ENCODE measurements at regions of chr17 and their contacts with region 1.

Region 1: DNA sequence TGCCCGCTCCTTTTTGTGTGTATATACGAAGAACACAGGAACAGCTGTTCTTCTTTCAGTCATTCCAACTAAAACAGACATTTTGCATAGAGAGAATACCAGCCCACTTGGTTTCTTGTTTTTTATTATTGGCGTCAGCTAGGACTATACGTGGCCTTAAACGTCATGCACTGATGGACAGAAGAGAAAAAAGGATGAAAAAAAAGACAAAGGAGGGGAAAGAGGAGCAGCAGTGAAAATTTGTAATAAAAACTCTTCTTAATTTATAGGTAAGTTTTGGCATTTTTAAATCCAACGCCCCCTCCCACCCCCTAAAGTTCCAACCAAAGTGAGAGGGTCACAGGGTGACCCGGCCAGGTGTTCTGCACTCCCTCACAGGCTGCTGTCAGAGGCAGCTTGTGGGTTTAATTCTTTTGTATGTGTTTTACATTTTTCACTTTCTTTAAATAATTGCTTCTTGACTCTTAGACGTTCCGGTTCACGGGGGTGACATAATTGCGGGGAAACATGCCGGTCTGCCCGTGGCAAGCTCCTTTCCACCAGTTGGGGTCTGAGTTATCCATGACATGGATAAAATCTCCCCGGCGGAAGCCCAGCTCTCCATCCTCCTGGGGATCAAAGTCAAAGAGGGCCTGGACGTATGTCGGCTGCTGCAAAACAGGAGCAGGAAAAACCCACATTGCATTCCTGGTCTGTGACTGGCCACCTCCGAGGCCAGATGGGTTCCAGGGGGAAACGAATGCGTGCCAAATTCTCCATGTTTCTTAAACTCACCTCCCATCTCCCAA is 30.9 kb upstream of the SLC25A19 start:
- DNase-seq: no peak
- H3K4me3 ChIP-seq: no peak overlapping the region
- H3K27ac ChIP-seq: no peak overlapping the region
- H3K4me1 ChIP-seq: peaks cover 2% of the 10 kb centered on the region
- H3K27me3 ChIP-seq: no peaks in the 10 kb centered on the region
- CTCF ChIP-seq: no peak
- EP300 ChIP-seq: no peak
- POLR2A ChIP-seq: no peak

Region 2: DNA sequence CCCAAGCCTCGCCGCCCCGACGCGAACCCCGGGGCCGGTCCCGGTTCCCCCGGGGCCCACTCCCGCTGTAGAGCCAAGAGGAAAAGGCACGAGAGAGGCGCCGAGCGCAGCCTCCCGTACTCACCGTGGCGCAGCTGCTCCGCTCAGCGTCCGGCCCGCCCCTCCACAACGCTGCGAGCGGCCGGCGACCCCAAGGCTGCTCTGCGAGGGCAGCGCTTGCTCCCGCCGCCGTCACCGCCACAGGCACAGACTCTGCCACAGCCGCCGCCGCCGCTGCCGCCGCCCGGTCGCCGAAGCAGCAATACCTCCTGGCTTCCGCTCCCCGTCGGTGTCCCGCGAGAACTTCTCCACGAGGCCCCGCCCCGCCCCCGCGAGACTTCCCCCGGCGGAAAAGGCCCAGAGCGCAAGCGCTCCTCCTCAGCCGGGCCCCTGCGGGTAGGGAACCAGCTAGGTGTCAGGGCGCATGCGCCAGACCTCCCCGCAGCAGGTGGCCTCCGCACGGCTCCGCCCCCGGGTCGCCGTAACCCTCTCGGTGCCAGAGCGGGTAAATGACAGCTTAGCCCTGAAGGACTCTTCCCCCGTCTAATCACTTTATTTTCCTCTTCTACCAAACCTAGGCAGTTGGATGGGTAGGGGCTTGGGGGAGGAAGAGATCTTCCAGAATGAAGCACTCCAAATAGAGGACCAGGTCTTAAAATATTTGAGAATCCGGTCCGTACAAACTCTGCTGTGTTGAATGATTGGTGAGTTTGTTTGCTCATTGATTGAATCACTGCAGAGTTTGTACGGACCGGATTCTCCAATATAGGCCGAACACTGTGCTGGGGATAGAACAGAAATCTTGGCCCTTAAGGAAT is 85.5 kb after region 1 on chr17 and contains the start of gene GRB2:
- intact Hi-C with region 1: loop called in 3 of 4 experiments (anchors 2 to 5 kb)
- DNase-seq: peak; percentile 99
- H3K4me3 ChIP-seq: peak within 1 kb of the TSS; percentile 87
- H3K27ac ChIP-seq: peak within 1 kb of the TSS; percentile 26 to 80
- H3K4me1 ChIP-seq: peaks cover 1% of the 10 kb centered on the region
- H3K27me3 ChIP-seq: no peaks in the 10 kb centered on the region
- CTCF ChIP-seq: no peak
- EP300 ChIP-seq: no peak
- POLR2A ChIP-seq: peak; percentile 70
- total RNA-seq, gene GRB2: 49.2 to 84.9 (median 62.6) TPM

Region 3: DNA sequence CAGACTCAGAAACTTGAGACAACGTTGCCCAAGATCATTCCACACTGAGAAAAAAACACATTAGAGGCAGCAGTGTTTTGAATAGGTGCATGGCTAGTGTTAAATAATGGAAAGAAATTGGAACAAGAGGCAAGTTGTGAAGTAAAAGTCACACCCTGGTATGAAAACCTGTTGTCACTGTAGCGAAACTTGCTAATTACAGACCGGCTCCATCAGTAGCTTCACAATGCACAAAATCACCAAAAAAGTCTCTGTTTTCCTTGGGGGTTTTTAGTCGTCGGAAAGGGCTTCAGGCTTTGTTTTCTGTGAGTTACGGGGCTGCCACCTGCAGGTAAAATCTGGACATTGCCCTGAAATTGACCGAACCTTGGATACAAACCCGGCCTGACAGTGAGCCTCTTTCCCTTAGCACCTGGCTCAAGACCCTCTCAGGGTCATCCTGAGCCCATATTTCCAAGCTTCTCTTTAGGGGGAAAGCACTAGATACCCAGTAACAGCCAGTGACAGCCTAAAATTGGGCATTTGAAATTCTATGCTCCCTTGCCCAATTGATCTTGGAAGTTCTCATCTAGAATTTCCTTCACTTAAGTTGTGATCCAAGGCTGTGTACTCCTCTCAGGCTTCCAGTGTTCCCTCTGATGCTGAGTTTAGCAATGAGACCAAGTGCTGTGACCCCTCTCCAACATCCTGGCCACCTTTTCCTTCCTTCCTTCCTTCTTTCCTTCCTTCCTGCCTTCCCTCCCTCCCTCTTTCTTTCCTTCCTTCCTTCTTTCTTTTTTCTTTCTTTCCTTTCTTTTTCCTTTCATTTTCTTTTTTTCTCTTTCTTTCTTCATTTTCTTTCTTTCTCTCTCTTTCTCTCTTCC is 92.6 kb after region 1 on chr17:
- intact Hi-C with region 1: loop called in 3 of 4 experiments (anchors 2 to 5 kb)
- DNase-seq: peak; percentile 39 to 72 (median 66)
- H3K4me3 ChIP-seq: no peak overlapping the region
- H3K27ac ChIP-seq: no peak overlapping the region
- H3K4me1 ChIP-seq: no peaks in the 10 kb centered on the region
- H3K27me3 ChIP-seq: no peaks in the 10 kb centered on the region
- CTCF ChIP-seq: peak; percentile 43 to 83 (median 61)
- EP300 ChIP-seq: no peak
- POLR2A ChIP-seq: no peak

Region 4: GRCh38 chr17:75515496-75516254 is 195.6 kb after region 1 on chr17 and contains the start of gene CASKIN2:
- intact Hi-C with region 1: loop called in 1 of 4 experiments (anchors 10 kb)
- DNase-seq: peak; percentile 98 to 99 (median 99)
- H3K4me3 ChIP-seq: peak within 1 kb of the TSS; percentile 94
- H3K27ac ChIP-seq: peak within 1 kb of the TSS; percentile 69 to 79
- H3K4me1 ChIP-seq: peaks cover 23% of the 10 kb centered on the region
- H3K27me3 ChIP-seq: no peaks in the 10 kb centered on the region
- CTCF ChIP-seq: peak; percentile 93 to 99 (median 98)
- EP300 ChIP-seq: no peak
- POLR2A ChIP-seq: peak; percentile 12
- total RNA-seq, gene CASKIN2: 9.1 to 58.7 (median 41.3) TPM